ENCODE measurements at regions of chr15 and their contacts with region 1.

Region 1: GRCh38 chr15:51380999-51381795 is 39.7 kb downstream of the GLDN start:
- DNase-seq: peak; percentile 71
- ATAC-seq: peak; percentile 93
- H3K4me3 ChIP-seq: no peak overlapping the region
- H3K27ac ChIP-seq: no peak overlapping the region
- H3K4me1 ChIP-seq: no peaks in the 10 kb centered on the region
- H3K27me3 ChIP-seq: 0 out of 2 replicates have a peak, but pooled peaks cover 5% of the 10 kb centered on the region
- CTCF ChIP-seq: peak; percentile 91

Region 2: DNA sequence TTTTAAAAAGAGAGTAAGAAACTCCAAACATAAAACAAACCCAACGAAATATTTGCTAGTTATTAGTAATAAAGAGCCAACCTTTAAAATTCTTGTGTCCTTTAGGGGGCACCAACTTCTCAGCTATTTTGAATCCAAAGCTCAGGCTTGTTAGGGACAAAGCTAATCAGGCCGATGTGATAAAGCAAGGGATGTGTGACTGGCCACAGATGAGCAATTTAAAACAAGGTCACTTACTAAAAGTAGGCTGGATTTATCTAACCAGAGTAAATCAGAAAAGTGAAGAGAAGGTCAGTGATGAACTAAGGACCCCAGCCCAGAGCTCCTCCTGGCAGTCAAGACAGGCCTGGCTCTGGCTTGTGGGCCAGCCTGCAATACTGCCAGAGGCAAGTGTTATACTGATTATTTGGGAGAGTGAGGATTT is 151.3 kb before region 1 on chr15:
- CTCF ChIA-PET with region 1: interaction called, 8 read pairs
- POLR2A ChIA-PET with region 1: no interaction called
- in situ Hi-C with region 1: no loop called
- intact Hi-C with region 1: loop called (anchors 5 kb)
- DNase-seq: no peak
- ATAC-seq: peak; percentile 60; the same call in 1 of the 2 replicates
- H3K4me3 ChIP-seq: no peak overlapping the region
- H3K27ac ChIP-seq: no peak overlapping the region
- H3K4me1 ChIP-seq: no peaks in the 10 kb centered on the region
- H3K27me3 ChIP-seq: no peaks in the 10 kb centered on the region
- CTCF ChIP-seq: peak; percentile 43

Region 3: DNA sequence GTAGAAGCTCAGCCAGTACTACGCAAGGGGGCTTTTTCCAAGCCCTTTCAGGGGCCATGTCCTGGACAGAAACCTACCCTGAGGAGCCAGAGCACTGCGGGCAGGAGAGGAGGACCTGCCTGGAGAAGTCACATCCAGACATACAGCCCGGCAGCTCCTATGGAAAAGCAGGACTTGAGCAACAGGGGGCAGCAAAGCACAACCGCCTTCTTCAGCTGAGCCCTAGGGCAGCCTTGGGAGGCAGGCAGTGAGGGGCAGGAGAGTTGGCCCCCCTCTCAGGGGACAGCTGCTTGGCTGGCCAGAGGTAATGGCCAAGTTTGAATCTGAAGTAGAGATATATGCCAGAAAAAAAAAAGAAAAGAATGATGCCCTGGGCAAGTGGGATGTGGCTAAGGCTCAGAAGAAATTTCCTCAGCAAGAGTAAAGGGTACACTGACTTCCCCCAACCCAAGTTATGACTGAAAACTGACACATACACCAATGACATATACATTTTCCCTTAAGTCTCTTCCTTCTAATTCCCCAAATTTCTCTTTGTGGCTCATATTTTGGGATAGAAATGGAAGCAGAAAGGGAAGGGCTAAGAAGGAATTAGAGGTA is 99.7 kb before region 1 on chr15:
- CTCF ChIA-PET with region 1: interaction called, 4 read pairs
- POLR2A ChIA-PET with region 1: no interaction called
- in situ Hi-C with region 1: no loop called
- intact Hi-C with region 1: loop called (anchors 1 kb)
- DNase-seq: no peak
- ATAC-seq: peak; percentile 83
- H3K4me3 ChIP-seq: no peak overlapping the region
- H3K27ac ChIP-seq: no peak overlapping the region
- H3K4me1 ChIP-seq: no peaks in the 10 kb centered on the region
- H3K27me3 ChIP-seq: peaks cover 8% of the 10 kb centered on the region
- CTCF ChIP-seq: peak; percentile 77

Region 4: DNA sequence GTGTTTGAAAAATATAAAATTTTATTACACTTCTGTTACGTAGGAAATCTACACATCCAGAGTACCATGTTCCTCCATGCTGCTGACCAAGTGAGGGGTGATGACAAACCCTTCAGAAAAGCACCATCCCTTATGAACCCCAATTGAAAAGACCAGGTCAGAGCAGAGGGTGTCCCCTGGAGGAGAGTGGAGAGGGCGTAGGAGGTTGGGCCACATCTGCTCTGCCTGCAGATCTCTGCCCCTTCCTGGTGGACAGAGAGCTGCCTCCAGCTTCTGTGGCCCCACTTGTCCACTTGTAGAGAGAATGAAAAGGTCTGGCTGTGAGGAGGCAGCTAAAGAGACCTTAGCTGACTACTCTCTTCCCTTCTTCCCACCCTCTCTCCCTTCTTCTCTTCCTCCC is 15.7 kb after region 1 on chr15:
- CTCF ChIA-PET with region 1: no interaction called
- POLR2A ChIA-PET with region 1: no interaction called
- in situ Hi-C with region 1: no loop called
- intact Hi-C with region 1: no loop called
- DNase-seq: no peak
- ATAC-seq: no peak
- H3K4me3 ChIP-seq: no peak overlapping the region
- H3K27ac ChIP-seq: no peak overlapping the region
- H3K4me1 ChIP-seq: no peaks in the 10 kb centered on the region
- H3K27me3 ChIP-seq: peaks cover 9% of the 10 kb centered on the region
- CTCF ChIP-seq: no peak

Region 5: DNA sequence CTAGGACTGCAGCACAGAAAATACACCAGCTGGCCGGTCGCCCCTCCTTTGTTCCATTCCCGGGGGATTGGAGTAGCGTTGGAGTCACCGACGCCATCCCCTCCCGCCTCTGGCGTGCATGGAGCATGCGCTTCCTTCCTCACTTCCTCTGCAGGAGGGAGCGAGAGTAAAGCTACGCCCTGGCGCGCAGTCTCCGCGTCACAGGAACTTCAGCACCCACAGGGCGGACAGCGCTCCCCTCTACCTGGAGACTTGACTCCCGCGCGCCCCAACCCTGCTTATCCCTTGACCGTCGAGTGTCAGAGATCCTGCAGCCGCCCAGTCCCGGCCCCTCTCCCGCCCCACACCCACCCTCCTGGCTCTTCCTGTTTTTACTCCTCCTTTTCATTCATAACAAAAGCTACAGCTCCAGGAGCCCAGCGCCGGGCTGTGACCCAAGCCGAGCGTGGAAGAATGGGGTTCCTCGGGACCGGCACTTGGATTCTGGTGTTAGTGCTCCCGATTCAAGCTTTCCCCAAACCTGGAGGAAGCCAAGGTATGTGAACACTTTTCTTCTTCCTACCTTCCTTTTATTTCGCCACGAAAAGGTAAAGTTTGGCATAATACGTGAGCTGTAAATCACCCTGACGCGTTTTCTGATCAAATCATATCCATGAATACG is 300.2 kb after region 1 on chr15 and contains the start of gene SCG3:
- CTCF ChIA-PET with region 1: no interaction called
- POLR2A ChIA-PET with region 1: no interaction called
- in situ Hi-C with region 1: no loop called
- intact Hi-C with region 1: no loop called
- DNase-seq: no peak
- ATAC-seq: peak; percentile 92
- H3K4me3 ChIP-seq: peak within 1 kb of the TSS; percentile 16 to 30
- H3K27ac ChIP-seq: no peak within 1 kb of the TSS
- H3K4me1 ChIP-seq: no peaks in the 10 kb centered on the region
- H3K27me3 ChIP-seq: peaks cover 55% of the 10 kb centered on the region
- CTCF ChIP-seq: no peak
- total RNA-seq, gene SCG3: 0.62 TPM